Mammary epithelial cell (primary cell): ENCODE measurements at regions of chr14 and their contacts with region 1.

Region 1: GRCh38 chr14:31992011-31992447 is 85.1 kb upstream of the ARHGAP5 start:
- DNase-seq: peak; percentile 95
- H3K4me3 ChIP-seq: no peak overlapping the region
- H3K27ac ChIP-seq: peak overlapping the region; percentile 85
- H3K4me1 ChIP-seq: peaks cover 48% of the 10 kb centered on the region
- H3K27me3 ChIP-seq: no peaks in the 10 kb centered on the region
- CTCF ChIP-seq: no peak

Region 2: DNA sequence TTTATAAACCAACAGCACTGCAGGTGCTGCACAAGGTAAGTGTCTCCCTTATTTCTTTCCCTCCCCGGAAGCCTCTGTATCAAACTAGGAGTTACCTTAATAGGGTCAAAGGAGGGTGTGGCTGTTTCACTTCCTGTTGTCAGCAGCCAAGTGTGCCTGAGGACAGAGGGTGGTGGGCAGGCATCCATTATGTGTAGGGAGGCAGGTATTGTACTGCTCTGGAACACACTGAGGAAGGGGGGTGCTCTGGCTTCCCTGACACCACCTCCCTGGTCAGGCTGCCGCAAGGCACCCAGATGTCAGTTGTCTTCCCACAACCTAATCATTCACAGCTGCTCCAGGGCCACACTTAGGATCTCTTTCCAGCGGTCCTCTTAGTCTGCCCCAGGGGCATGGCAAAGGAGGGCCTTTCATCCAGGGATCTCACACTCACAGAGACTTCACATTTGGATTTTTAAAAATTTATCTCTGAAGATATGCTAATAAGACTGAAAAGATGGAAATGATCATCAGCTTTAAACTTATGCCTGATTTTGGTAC is 46.9 kb before region 1 on chr14:
- CTCF ChIA-PET with region 1: no interaction called
- dilution Hi-C with region 1: no loop called
- in situ Hi-C with region 1: no loop called
- intact Hi-C with region 1: loop called (anchors 5 kb)
- DNase-seq: no peak
- H3K4me3 ChIP-seq: no peak overlapping the region
- H3K27ac ChIP-seq: peak overlapping the region; percentile 4
- H3K4me1 ChIP-seq: peaks cover 58% of the 10 kb centered on the region
- H3K27me3 ChIP-seq: no peaks in the 10 kb centered on the region
- CTCF ChIP-seq: no peak

Region 3: DNA sequence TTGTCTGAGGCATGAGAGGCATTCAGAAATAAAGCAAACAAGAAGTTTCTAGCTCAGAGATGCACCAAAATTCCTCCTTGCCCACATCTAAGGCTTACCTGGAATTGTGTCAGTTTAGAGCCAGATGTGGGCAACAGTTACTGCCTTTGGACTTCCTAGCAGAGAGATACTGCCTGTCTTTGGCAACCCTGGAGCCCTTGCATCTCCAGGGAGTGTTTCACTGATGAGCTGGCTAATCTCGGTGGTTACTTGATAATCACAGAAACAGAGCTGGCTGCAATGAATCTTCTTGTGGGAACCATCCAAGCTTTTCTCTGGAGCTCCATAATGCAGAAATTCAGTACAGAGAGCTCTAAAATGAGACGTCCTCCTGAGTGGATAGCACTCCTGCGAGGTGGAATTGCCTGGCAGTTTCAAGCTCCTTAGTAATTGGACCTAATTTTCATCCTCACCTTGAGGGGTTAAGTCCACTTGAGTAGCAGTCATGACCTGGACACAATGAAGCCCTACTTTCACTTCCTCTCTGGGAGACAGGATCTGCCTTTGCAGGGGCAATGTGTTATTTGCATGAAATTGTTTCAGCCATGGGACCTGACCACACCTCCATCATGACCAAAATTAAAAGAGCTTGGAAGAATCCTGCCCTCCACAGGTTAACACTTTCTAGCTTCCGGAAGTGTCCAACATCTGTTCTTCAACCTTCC is 23.8 kb before region 1 on chr14:
- CTCF ChIA-PET with region 1: no interaction called
- dilution Hi-C with region 1: no loop called
- in situ Hi-C with region 1: no loop called
- intact Hi-C with region 1: no loop called
- DNase-seq: peak; percentile 88
- H3K4me3 ChIP-seq: no peak overlapping the region
- H3K27ac ChIP-seq: no peak overlapping the region
- H3K4me1 ChIP-seq: peaks cover 32% of the 10 kb centered on the region
- H3K27me3 ChIP-seq: no peaks in the 10 kb centered on the region
- CTCF ChIP-seq: no peak